Mammary epithelial cell (primary cell): ENCODE measurements at regions of chr19 and their contacts with region 1.

Region 1: GRCh38 chr19:12736995-12737834 is at the start of gene GET3:
- DNase-seq: peak; percentile 100
- H3K4me3 ChIP-seq: peak within 1 kb of the TSS; percentile 86 to 98 (median 91)
- H3K27ac ChIP-seq: peak within 1 kb of the TSS; percentile 99
- H3K4me1 ChIP-seq: peaks cover 18% of the 10 kb centered on the region
- H3K27me3 ChIP-seq: no peaks in the 10 kb centered on the region
- CTCF ChIP-seq: no peak
- total RNA-seq, gene GET3: 64.3 to 74.5 TPM

Region 2: GRCh38 chr19:12681074-12681951 is 55.9 kb before region 1 on chr19 and contains the start of gene DHPS:
- CTCF ChIA-PET with region 1: no interaction called
- dilution Hi-C with region 1: no loop called
- in situ Hi-C with region 1: no loop called
- intact Hi-C with region 1: loop called (anchors 1 kb)
- DNase-seq: peak; percentile 97
- H3K4me3 ChIP-seq: peak within 1 kb of the TSS; percentile 81 to 89 (median 83)
- H3K27ac ChIP-seq: peak within 1 kb of the TSS; percentile 95
- H3K4me1 ChIP-seq: no peaks in the 10 kb centered on the region
- H3K27me3 ChIP-seq: no peaks in the 10 kb centered on the region
- CTCF ChIP-seq: no peak
- total RNA-seq, gene DHPS: 46.5 to 73.8 TPM

Region 3: DNA sequence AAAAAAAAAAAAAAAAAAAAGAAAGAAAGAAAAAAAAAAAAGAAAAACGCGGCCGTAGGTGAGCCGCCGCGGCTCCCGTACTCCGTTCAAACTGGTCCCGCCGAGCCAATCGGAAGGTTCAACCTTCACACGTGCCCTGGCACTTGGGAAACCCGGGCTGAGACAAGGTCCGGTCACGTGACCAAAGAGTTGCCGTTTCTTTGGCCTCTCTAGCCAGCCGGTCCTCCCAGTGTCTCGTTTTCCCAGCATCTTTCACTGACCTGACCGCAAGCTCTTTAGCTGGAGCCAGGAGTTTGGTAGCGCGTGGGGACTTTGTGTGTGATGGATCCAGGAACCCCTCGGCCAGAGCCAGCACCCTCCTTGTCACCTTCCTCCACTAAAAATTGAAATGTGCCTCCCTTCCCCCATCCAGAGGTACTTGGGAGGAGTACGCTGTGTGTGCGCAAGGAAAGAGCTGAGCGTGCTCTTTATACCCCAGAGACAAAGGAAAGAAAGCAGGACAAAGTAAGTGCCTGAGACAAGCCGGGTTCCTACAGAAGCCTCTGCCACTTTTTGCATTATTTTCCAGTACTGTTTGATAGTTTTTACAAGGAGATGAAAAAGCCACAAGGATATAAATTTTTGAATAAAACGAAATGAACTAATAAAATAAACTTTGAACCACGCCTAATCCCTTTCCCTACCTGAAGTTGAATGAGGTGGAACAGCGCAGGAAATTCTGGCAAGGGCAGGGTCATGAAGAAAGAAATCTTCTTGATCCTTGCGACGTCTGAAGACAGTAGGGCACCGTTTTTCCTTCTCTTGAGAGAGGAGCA is 14.4 kb before region 1 on chr19:
- CTCF ChIA-PET with region 1: no interaction called
- dilution Hi-C with region 1: no loop called
- in situ Hi-C with region 1: no loop called
- intact Hi-C with region 1: loop called (anchors 1 kb)
- DNase-seq: peak; percentile 98
- H3K4me3 ChIP-seq: peak overlapping the region; percentile 79 to 95 (median 81)
- H3K27ac ChIP-seq: peak overlapping the region; percentile 81
- H3K4me1 ChIP-seq: peaks cover 34% of the 10 kb centered on the region
- H3K27me3 ChIP-seq: no peaks in the 10 kb centered on the region
- CTCF ChIP-seq: no peak

Region 4: GRCh38 chr19:12757544-12758274 is 20.5 kb after region 1 on chr19:
- CTCF ChIA-PET with region 1: interaction called, 3 read pairs
- dilution Hi-C with region 1: no loop called
- in situ Hi-C with region 1: no loop called
- intact Hi-C with region 1: loop called (anchors 2 kb)
- DNase-seq: peak; percentile 55
- H3K4me3 ChIP-seq: peak overlapping the region in 2 of 3 experiments; percentile 32 to 38
- H3K27ac ChIP-seq: no peak overlapping the region
- H3K4me1 ChIP-seq: peaks cover 7% of the 10 kb centered on the region
- H3K27me3 ChIP-seq: no peaks in the 10 kb centered on the region
- CTCF ChIP-seq: peak; percentile 82 to 92